GM12878 (cell line): ENCODE measurements at regions of chr1 and their contacts with region 1.

Region 1: GRCh38 chr1:81600878-81601622 is 199.7 kb upstream of the ADGRL2 start:
- DNase-seq: no peak
- ATAC-seq: peak; percentile 71
- H3K4me3 ChIP-seq: no peak overlapping the region
- H3K27ac ChIP-seq: no peak overlapping the region; the same call in 1 of the 2 replicates
- H3K4me1 ChIP-seq: peaks cover 9% of the 10 kb centered on the region
- H3K27me3 ChIP-seq: no peaks in the 10 kb centered on the region
- CTCF ChIP-seq: no peak
- EP300 ChIP-seq: peak; percentile 42 to 72; a peak in 2 of 4 replicates
- POLR2A ChIP-seq: no peak
- RAD21 ChIP-seq: no peak

Region 2: GRCh38 chr1:81430955-81431623 is 170.0 kb before region 1 on chr1:
- CTCF ChIA-PET with region 1: no interaction called
- POLR2A ChIA-PET with region 1: no interaction called
- RAD21 ChIA-PET with region 1: no interaction called
- SMC1A ChIA-PET with region 1: no interaction called
- in situ Hi-C with region 1: no loop called
- intact Hi-C with region 1: no loop called
- DNase-seq: peak; percentile 12
- ATAC-seq: peak; percentile 49; the same call in 2 of the 3 replicates
- H3K4me3 ChIP-seq: no peak overlapping the region
- H3K27ac ChIP-seq: no peak overlapping the region
- H3K4me1 ChIP-seq: no peaks in the 10 kb centered on the region
- H3K27me3 ChIP-seq: no peaks in the 10 kb centered on the region; a peak in 1 of 4 replicates
- CTCF ChIP-seq: no peak
- EP300 ChIP-seq: no peak
- POLR2A ChIP-seq: no peak
- RAD21 ChIP-seq: no peak

Region 3: DNA sequence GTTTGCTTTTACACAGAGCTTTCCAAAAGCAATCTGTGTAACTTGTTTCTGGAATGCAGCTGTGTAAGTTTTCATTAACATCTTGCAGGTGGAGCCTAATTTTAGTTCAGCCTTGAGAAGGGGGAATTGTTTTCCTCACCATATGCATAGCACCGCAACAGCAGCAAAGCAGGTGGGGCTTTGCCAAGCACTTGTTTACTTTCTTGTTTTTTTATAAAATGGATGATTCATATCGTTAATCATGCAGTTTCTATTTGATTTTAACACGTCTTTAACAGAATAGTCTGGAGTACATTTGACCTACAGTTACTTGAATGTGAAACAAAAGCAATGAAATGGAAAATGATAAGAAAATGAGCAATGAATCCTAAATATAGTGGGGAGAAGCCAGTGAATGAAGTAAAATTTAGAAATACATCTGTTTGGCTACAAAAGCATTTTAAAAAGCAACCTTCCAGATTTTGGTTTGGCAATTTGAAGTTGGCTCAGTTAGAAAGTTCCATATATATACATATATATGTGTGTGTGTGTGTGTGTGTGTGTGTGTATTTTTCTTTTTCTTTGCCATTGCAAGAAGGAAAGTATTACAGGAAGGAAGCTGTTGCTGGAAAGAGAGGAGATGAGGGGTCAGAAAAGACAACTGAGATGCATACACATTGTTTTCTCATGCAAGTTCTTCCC is 80.7 kb after region 1 on chr1:
- CTCF ChIA-PET with region 1: no interaction called
- POLR2A ChIA-PET with region 1: interaction called, 4 read pairs
- RAD21 ChIA-PET with region 1: interaction called, 3 read pairs
- SMC1A ChIA-PET with region 1: interaction called, 3 read pairs
- in situ Hi-C with region 1: no loop called
- intact Hi-C with region 1: loop called (anchors 5 kb)
- DNase-seq: no peak
- ATAC-seq: peak; percentile 84
- H3K4me3 ChIP-seq: no peak overlapping the region
- H3K27ac ChIP-seq: no peak overlapping the region
- H3K4me1 ChIP-seq: no peaks in the 10 kb centered on the region
- H3K27me3 ChIP-seq: no peaks in the 10 kb centered on the region
- CTCF ChIP-seq: no peak
- EP300 ChIP-seq: peak; percentile 28 to 32; a peak in 2 of 4 replicates
- POLR2A ChIP-seq: no peak
- RAD21 ChIP-seq: no peak

Region 4: DNA sequence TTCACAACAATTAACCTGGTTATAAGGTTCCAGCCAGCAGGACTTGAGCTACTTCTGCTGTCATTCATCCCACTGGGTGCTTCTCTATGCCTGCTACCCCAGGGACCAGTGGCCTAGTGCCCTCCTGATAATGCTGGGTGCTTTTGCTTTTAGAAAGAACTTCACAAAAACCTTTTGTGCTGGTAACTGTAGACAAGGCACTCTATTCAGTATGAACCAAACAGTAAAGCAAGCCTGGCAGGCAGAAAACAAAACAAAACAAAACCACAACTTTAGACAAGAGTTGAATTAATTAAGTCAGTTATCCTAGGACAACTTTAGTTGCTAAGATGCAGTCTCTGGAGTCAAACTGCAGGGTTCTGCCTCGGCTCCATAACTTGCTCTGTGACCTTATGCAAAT is 137.8 kb after region 1 on chr1:
- CTCF ChIA-PET with region 1: no interaction called
- POLR2A ChIA-PET with region 1: no interaction called
- RAD21 ChIA-PET with region 1: interaction called, 3 read pairs
- SMC1A ChIA-PET with region 1: interaction called, 5 read pairs
- in situ Hi-C with region 1: no loop called
- intact Hi-C with region 1: loop called (anchors 5 kb)
- DNase-seq: no peak
- ATAC-seq: peak; percentile 31
- H3K4me3 ChIP-seq: no peak overlapping the region
- H3K27ac ChIP-seq: no peak overlapping the region
- H3K4me1 ChIP-seq: no peaks in the 10 kb centered on the region
- H3K27me3 ChIP-seq: no peaks in the 10 kb centered on the region
- CTCF ChIP-seq: no peak
- EP300 ChIP-seq: no peak
- POLR2A ChIP-seq: no peak
- RAD21 ChIP-seq: no peak